Dorsolateral prefrontal cortex (tissue), 120 donors: ENCODE measurements at regions of chr15 and their contacts with region 1.

Region 1: DNA sequence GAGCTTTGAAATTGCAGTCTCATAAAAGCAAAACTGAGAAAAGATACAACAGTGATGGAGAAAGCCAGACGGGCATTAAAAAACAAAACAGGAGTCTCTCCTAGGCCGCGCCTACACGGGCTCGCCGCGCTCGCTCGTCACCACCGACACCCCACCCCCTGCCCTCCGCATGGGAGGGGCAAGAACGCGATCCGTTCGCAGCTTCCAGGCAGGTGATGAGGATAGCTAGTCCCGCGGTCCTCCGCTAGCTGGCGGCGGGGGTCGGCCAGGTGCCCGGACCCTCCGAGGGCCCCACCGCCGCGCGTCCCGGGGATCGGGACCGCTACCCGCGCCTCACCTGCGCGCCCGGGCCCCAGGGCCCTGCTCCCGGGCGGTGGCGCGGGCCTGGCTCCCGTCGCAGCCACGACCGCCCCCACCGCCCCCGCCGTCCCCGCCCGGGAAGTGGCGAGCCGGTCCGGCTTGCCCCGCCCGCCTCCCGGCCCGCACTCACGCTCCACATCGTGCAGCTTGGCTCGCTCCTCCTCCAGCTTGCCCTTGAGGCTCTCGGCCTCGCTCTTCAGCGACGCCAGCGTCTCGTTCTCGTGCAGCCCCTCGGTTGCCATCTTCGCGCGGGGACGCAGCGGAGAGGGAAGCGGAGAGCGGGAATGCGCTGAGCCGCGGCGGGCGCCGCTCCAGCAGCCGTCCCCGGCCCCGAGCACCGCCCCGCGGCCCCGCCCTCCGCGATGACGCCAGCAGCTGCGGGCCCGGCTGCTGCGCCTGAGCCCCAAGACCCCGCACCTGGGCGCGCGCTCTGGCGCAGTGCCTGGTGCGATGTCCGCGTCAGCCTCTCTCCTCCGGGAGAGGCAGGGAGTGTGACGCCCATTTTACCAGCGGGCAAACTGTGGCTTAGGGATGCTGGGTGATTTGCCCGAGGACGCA is 11.7 kb downstream of the GNB5 start:
- DNase-seq: peak; percentile 52 to 92 (median 80)
- H3K4me3 ChIP-seq: peak overlapping the region; percentile 55 to 98 (median 81)
- H3K27ac ChIP-seq: peak overlapping the region in 58 of 59 donors; percentile 31 to 96 (median 86)
- H3K27me3 ChIP-seq: no peaks in the 10 kb centered on the region
- CTCF ChIP-seq: peak in 2 of 56 donors; percentile 1 to 7

Region 2: GRCh38 chr15:51869070-51869425 is 310.5 kb before region 1 on chr15:
- intact Hi-C with region 1: no loop called
- DNase-seq: no peak
- H3K4me3 ChIP-seq: no peak overlapping the region
- H3K27ac ChIP-seq: peak overlapping the region in 1 of 59 donors; percentile 34
- H3K27me3 ChIP-seq: no peaks in the 10 kb centered on the region
- CTCF ChIP-seq: no peak

Region 3: GRCh38 chr15:52093539-52094502 is 85.7 kb before region 1 on chr15:
- intact Hi-C with region 1: no loop called
- DNase-seq: no peak
- H3K4me3 ChIP-seq: no peak overlapping the region
- H3K27ac ChIP-seq: no peak overlapping the region
- H3K27me3 ChIP-seq: no peaks in the 10 kb centered on the region
- CTCF ChIP-seq: no peak

Region 4: DNA sequence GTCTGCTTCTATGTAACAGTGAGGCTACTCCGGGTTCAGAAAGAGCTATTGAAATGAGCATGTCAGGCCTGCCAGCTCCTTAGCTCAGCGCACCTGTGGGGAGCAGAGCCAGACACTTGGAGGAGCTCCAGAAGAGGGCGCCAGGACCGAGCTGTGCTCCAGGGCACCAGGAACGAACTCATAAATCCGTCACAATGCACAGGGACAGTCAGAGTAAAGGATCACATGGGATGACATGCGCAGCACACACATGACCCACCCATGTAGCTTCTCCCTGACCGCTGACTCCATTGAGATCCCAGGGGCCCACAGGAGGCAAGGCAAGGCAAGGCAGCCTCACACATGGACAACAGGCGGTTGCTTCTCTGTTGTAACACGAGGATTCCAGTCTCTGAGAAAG is 37.6 kb after region 1 on chr15:
- intact Hi-C with region 1: loop called in 1 of 2 experiments (anchors 5 kb)
- DNase-seq: peak in 1 of 10 donors; percentile 78
- H3K4me3 ChIP-seq: no peak overlapping the region
- H3K27ac ChIP-seq: no peak overlapping the region
- H3K27me3 ChIP-seq: no peaks in the 10 kb centered on the region
- CTCF ChIP-seq: no peak